HCT116 (cell line): ENCODE measurements at regions of chr3 and their contacts with region 1.

Region 1: DNA sequence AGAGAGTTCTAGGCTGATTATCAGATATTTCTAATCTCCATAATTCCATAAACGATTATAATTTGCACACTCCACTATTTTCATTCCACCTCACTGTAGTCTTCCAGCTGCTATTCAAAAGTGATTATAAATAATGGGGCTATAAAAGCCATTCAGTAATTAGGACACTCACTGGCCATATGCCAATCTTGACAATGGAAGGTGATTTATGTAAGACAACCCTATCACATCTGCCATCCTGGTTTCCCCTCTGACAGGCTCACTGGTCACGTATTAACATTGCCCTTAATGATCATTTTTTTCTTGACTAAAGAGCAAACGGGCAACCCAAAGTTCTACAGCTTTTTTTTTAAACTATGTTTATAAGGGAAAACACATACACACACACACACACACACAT is 402.4 kb downstream of the MAGI1 start:
- DNase-seq: no peak
- ATAC-seq: no peak
- H3K4me3 ChIP-seq: no peak overlapping the region
- H3K27ac ChIP-seq: no peak overlapping the region
- H3K4me1 ChIP-seq: no peaks in the 10 kb centered on the region
- H3K27me3 ChIP-seq: no peaks in the 10 kb centered on the region
- CTCF ChIP-seq: no peak
- POLR2A ChIP-seq: no peak
- RAD21 ChIP-seq: no peak

Region 2: GRCh38 chr3:65483480-65483879 is 152.8 kb before region 1 on chr3:
- CTCF ChIA-PET with region 1: no interaction called
- POLR2A ChIA-PET with region 1: no interaction called
- RAD21 ChIA-PET with region 1: no interaction called
- intact Hi-C with region 1: no loop called
- DNase-seq: no peak
- ATAC-seq: no peak
- H3K4me3 ChIP-seq: no peak overlapping the region
- H3K27ac ChIP-seq: no peak overlapping the region
- H3K4me1 ChIP-seq: peaks cover 0 to 10% of the 10 kb centered on the region in 2 experiments; a peak in 1 of 4 replicates
- H3K27me3 ChIP-seq: no peaks in the 10 kb centered on the region
- CTCF ChIP-seq: no peak
- POLR2A ChIP-seq: no peak
- RAD21 ChIP-seq: no peak

Region 3: DNA sequence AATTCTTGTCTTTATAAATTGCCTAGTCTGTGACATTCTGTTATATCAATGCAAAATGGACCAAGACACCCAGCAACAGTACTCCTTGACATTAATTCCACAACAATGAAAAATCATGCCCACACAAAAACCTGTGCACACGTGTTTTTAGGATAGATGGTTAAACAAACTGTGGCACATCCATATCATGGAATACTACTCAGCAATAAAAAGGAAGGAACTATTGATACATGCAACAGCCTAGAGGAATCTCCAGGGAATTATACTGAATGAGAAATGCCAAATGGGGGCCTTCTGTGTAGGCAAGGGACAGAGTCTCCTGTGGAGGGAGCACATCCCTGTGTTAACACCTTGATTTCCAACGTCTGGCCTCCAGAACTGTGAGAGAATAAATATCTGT is 13.9 kb after region 1 on chr3:
- CTCF ChIA-PET with region 1: no interaction called
- POLR2A ChIA-PET with region 1: no interaction called
- RAD21 ChIA-PET with region 1: no interaction called
- intact Hi-C with region 1: loop called (anchors 2 kb)
- DNase-seq: no peak
- ATAC-seq: no peak
- H3K4me3 ChIP-seq: no peak overlapping the region
- H3K27ac ChIP-seq: no peak overlapping the region
- H3K4me1 ChIP-seq: no peaks in the 10 kb centered on the region
- H3K27me3 ChIP-seq: no peaks in the 10 kb centered on the region
- CTCF ChIP-seq: no peak
- POLR2A ChIP-seq: no peak
- RAD21 ChIP-seq: no peak

Region 4: DNA sequence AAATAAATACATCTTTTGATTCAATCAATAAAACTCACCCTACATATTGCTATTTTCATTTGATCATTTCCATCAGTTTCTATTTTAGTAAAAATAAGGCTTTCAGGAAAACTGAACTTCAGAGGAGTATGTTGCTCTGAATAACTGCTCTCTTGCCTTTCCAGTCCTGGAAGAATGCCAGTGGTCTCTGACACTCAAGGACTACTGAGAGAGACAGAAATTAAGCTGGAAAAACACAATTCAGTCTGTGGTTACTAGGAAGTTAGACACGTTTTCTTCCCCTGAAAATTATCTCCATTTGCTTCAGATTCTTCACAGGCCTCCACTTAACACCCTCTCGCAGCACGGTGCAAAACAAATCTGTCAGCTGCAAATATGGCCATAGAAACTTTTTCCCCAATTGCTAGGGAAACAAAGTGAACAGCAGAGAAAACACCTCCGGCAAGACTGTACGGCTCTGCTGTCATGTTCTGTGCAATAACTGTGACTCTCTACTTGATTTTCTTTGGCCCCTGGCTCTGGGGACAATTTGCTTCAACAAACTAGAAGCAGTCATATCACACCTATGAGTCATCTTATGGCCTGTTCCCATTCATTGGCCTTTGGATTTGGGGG is 49.4 kb after region 1 on chr3:
- CTCF ChIA-PET with region 1: no interaction called
- POLR2A ChIA-PET with region 1: no interaction called
- RAD21 ChIA-PET with region 1: no interaction called
- intact Hi-C with region 1: loop called (anchors 10 kb)
- DNase-seq: no peak
- ATAC-seq: no peak
- H3K4me3 ChIP-seq: no peak overlapping the region
- H3K27ac ChIP-seq: no peak overlapping the region
- H3K4me1 ChIP-seq: no peaks in the 10 kb centered on the region
- H3K27me3 ChIP-seq: no peaks in the 10 kb centered on the region
- CTCF ChIP-seq: no peak
- POLR2A ChIP-seq: no peak
- RAD21 ChIP-seq: no peak

Region 5: DNA sequence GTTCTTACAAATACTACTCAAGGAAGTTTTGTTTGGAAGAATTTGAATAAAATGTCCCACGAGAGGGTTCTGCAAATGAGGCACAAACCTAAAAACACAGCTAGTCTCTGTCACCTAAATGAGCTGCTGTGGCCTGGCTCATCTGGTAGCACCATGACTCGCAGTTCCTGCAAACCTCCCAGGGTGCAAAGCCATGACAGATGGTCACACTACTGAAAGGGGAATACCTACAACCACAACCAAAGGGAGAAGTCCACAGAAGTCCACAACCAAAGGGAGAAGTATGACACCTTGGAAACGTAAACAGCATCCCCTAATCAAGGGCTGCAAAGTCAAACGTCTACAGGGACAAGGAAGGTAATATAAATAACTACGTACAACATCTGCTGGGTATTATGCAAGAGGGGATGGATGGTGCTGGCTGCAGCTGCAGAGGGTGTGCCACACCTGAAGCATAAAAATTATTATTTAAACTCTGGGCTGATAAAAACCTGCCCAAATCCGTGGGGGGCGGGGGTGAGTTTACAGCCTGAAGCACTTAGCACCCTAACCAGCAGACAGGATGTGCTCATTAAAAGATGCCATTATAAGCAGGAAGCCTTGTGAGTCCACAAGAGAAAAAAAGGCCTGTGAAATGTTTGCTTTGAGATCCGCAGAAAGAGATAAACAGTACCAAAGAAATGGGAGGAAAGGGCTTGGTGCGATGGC is 218.4 kb after region 1 on chr3:
- CTCF ChIA-PET with region 1: no interaction called
- POLR2A ChIA-PET with region 1: no interaction called
- RAD21 ChIA-PET with region 1: no interaction called
- intact Hi-C with region 1: no loop called
- DNase-seq: no peak
- ATAC-seq: peak; percentile 36; the same call in 1 of the 2 replicates
- H3K4me3 ChIP-seq: no peak overlapping the region
- H3K27ac ChIP-seq: no peak overlapping the region
- H3K4me1 ChIP-seq: peaks cover 3 to 5% of the 10 kb centered on the region in 2 experiments; a peak in 2 of 4 replicates
- H3K27me3 ChIP-seq: no peaks in the 10 kb centered on the region
- CTCF ChIP-seq: no peak
- POLR2A ChIP-seq: no peak
- RAD21 ChIP-seq: no peak